HAP-1 (cell line): ENCODE measurements at regions of chr6 and their contacts with region 1.

Region 1: DNA sequence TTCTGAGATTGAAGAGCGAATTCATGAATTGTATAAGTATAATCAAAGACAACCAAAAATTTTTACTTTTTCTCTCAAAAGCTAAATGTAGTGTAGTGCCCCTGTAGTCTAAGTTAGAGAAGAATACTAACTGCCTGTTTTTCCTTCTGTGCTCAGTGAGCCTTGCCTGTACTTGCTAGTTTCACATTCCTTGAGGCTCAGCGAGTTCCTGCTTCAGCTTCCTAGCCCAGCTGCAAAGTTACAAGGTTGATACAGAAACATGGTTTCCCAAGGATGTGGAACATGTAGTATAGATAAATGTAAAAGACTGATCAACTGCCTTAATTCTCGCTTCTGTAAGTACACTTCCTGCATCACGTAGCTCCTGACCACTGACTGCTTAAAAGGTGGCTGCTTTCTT is 33.1 kb upstream of the SEC63 start:
- DNase-seq: no peak
- H3K4me3 ChIP-seq: no peak overlapping the region
- H3K4me1 ChIP-seq: no peaks in the 10 kb centered on the region; the same call in 1 of the 2 replicates
- H3K27me3 ChIP-seq: no peaks in the 10 kb centered on the region

Region 2: GRCh38 chr6:108039681-108040080 is 48.6 kb after region 1 on chr6:
- in situ Hi-C with region 1: loop called (anchors 10 kb)
- DNase-seq: no peak
- H3K4me3 ChIP-seq: no peak overlapping the region
- H3K4me1 ChIP-seq: no peaks in the 10 kb centered on the region
- H3K27me3 ChIP-seq: no peaks in the 10 kb centered on the region

Region 3: GRCh38 chr6:108526739-108527174 is 535.7 kb after region 1 on chr6:
- in situ Hi-C with region 1: loop called (anchors 10 kb)
- DNase-seq: peak in 1 of 2 experiments; percentile 68
- H3K4me3 ChIP-seq: no peak overlapping the region
- H3K4me1 ChIP-seq: no peaks in the 10 kb centered on the region
- H3K27me3 ChIP-seq: no peaks in the 10 kb centered on the region

Region 4: DNA sequence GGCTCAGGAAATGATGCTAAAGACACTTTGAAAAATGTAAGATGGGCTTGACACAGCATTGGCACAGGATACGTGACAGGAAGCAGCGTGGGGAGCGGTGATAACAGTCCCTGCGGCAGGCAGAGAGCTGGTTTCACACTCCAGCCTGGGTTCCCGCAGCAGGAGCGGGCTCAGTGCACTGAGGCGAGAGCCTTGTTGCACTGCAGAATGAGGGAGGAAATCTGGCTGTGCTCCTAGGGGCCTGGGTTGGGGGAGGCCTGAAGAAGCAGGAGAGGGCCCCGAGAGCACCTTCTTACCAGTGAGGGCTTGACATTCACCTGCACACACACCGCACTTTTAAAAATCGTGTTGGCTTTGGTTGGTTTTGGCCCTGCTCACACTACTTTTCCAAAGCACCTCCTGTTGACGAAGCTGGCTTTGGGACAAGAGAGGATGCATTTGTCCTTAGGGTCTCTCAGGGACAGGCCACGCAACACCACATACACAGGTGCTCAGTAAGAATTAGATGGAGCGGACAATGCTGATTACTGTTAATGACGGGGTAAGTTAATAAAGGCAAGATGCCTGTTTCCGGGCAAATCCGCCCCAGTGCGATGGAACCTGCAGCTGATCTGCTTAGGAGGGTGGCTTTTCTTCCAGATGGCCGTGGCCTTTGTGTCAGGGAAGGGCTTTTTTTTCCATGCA is 807.8 kb after region 1 on chr6:
- in situ Hi-C with region 1: no loop called
- DNase-seq: peak; percentile 27 to 65
- H3K4me3 ChIP-seq: no peak overlapping the region
- H3K4me1 ChIP-seq: peaks cover 55% of the 10 kb centered on the region
- H3K27me3 ChIP-seq: no peaks in the 10 kb centered on the region